ENCODE measurements at regions of chrX and their contacts with region 1.

Region 1: GRCh38 chrX:10189317-10190268 is 32.8 kb downstream of the CLCN4 start:
- DNase-seq: peak; percentile 75 to 87 (median 83)
- H3K4me3 ChIP-seq: no peak overlapping the region
- H3K27ac ChIP-seq: no peak overlapping the region
- H3K4me1 ChIP-seq: no peaks in the 10 kb centered on the region
- H3K27me3 ChIP-seq: peaks cover 3% of the 10 kb centered on the region
- CTCF ChIP-seq: peak; percentile 86

Region 2: DNA sequence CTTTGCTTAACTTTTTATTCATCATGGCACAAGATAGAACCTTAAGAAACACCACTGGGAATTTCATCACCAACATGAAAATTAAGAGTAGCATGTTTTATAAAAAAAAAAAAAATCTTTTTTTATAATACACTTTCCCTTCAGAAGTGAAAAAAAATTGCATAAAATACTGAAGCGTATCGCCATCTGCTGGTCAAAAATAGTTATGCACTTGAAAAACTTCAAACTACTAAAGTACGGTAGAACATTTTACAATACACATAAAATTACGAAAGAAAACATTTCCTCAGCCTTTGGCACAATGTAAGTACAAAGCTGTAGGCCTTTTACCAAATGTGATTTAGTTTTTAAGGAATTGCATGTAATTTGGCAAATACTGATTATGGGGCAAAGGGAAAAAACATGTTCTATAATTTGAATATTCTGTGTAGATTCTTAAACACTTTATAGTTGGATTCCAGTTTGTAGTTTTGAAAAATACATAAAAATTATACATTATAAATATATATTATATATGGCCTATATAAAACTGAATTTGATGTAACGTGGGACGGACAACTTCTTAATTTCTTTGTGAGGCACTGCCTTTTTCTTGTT is 948.0 kb after region 1 on chrX:
- intact Hi-C with region 1: loop called (anchors 10 kb)
- DNase-seq: peak in 2 of 5 donors; percentile 52 to 55
- H3K4me3 ChIP-seq: no peak overlapping the region
- H3K27ac ChIP-seq: no peak overlapping the region
- H3K4me1 ChIP-seq: no peaks in the 10 kb centered on the region
- H3K27me3 ChIP-seq: no peaks in the 10 kb centered on the region
- CTCF ChIP-seq: peak; percentile 36

Measured in kidney (tissue), 22 donors.